Endothelial cell of umbilical vein (primary cell): ENCODE measurements at regions of chr10 and their contacts with region 1.

Region 1: DNA sequence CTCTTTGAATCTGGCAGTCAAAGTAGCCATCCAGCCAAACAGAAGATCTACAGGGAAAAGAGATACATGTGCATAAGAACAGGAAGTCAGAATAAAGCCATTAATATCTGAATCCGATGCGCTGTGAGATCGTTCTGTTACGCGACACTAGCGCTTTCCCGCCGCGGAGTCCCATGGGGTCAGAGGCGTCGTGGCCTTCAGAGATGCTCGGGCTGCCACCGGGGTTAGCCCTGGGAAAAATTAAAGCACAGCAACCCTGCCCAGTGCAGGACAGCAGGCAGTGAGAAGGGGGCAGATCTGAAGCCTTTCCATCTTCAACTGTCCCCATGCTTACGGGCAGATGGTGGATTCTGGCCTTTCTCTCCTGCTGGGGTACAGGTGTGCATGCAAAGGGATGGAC is 225.6 kb upstream of the MGMT start:
- DNase-seq: no peak
- H3K4me3 ChIP-seq: no peak overlapping the region
- H3K27ac ChIP-seq: no peak overlapping the region
- H3K4me1 ChIP-seq: no peaks in the 10 kb centered on the region
- H3K27me3 ChIP-seq: no peaks in the 10 kb centered on the region
- CTCF ChIP-seq: no peak
- POLR2A ChIP-seq: no peak

Region 2: GRCh38 chr10:129079705-129080104 is 161.8 kb before region 1 on chr10:
- CTCF ChIA-PET with region 1: no interaction called
- POLR2A ChIA-PET with region 1: no interaction called
- dilution Hi-C with region 1: no loop called
- intact Hi-C with region 1: no loop called
- DNase-seq: no peak
- H3K4me3 ChIP-seq: no peak overlapping the region
- H3K27ac ChIP-seq: no peak overlapping the region
- H3K4me1 ChIP-seq: no peaks in the 10 kb centered on the region
- H3K27me3 ChIP-seq: no peaks in the 10 kb centered on the region
- CTCF ChIP-seq: no peak
- POLR2A ChIP-seq: no peak

Region 3: GRCh38 chr10:129274748-129275474 is 33.5 kb after region 1 on chr10:
- CTCF ChIA-PET with region 1: no interaction called
- POLR2A ChIA-PET with region 1: no interaction called
- dilution Hi-C with region 1: no loop called
- intact Hi-C with region 1: no loop called
- DNase-seq: no peak
- H3K4me3 ChIP-seq: no peak overlapping the region
- H3K27ac ChIP-seq: no peak overlapping the region
- H3K4me1 ChIP-seq: no peaks in the 10 kb centered on the region
- H3K27me3 ChIP-seq: no peaks in the 10 kb centered on the region
- CTCF ChIP-seq: no peak
- POLR2A ChIP-seq: no peak

Region 4: DNA sequence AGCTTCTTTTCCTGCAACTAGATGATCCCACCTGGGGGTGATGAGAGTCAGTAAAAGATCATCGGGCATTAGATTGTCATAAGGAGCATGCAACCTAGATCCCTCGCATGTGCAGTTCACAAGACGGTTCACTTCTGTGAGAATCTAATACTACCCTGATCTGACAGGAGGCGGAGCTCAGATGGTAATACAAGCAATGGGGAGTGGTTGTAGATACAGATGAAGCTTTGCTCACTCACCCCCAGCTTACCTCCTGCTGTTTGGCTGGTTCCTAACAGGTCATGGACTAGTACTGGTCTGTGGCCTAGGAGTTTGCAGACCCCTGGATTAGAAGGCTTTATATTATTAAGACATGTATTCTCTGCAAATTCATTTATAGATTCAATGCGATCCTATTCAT is 44.0 kb after region 1 on chr10:
- CTCF ChIA-PET with region 1: no interaction called
- POLR2A ChIA-PET with region 1: no interaction called
- dilution Hi-C with region 1: no loop called
- intact Hi-C with region 1: loop called (anchors 1 kb)
- DNase-seq: no peak
- H3K4me3 ChIP-seq: no peak overlapping the region
- H3K27ac ChIP-seq: no peak overlapping the region
- H3K4me1 ChIP-seq: no peaks in the 10 kb centered on the region
- H3K27me3 ChIP-seq: no peaks in the 10 kb centered on the region
- CTCF ChIP-seq: no peak
- POLR2A ChIP-seq: no peak

Region 5: GRCh38 chr10:129553898-129554297 is 312.4 kb after region 1 on chr10:
- CTCF ChIA-PET with region 1: no interaction called
- POLR2A ChIA-PET with region 1: no interaction called
- dilution Hi-C with region 1: no loop called
- intact Hi-C with region 1: no loop called
- DNase-seq: no peak
- H3K4me3 ChIP-seq: no peak overlapping the region
- H3K27ac ChIP-seq: no peak overlapping the region
- H3K4me1 ChIP-seq: no peaks in the 10 kb centered on the region
- H3K27me3 ChIP-seq: no peaks in the 10 kb centered on the region
- CTCF ChIP-seq: no peak
- POLR2A ChIP-seq: no peak